Activated CD4-positive, alpha-beta T cell treated with anti-CD3 and anti-CD28 coated beads, Interleukin-2, amount 10 ng/mL, durations not matched to agents 7 days and 5 days (primary cell): ENCODE measurements at regions of chr12 and their contacts with region 1.

Region 1: GRCh38 chr12:10142976-10143589 is 13.1 kb upstream of the CLEC7A start:
- DNase-seq: no peak
- H3K4me3 Mint-ChIP-seq: no peak overlapping the region
- H3K27ac Mint-ChIP-seq: no peak overlapping the region
- H3K4me1 Mint-ChIP-seq: peaks cover 2% of the 10 kb centered on the region
- H3K27me3 Mint-ChIP-seq: peaks cover 26% of the 10 kb centered on the region

Region 2: GRCh38 chr12:9634177-9634803 is 508.8 kb before region 1 on chr12:
- CTCF ChIA-PET with region 1: no interaction called
- POLR2A ChIA-PET with region 1: no interaction called
- DNase-seq: peak; percentile 88
- H3K4me3 Mint-ChIP-seq: no peak overlapping the region
- H3K27ac Mint-ChIP-seq: peak overlapping the region; percentile 80
- H3K4me1 Mint-ChIP-seq: peaks cover 58% of the 10 kb centered on the region
- H3K27me3 Mint-ChIP-seq: no peaks in the 10 kb centered on the region

Region 3: DNA sequence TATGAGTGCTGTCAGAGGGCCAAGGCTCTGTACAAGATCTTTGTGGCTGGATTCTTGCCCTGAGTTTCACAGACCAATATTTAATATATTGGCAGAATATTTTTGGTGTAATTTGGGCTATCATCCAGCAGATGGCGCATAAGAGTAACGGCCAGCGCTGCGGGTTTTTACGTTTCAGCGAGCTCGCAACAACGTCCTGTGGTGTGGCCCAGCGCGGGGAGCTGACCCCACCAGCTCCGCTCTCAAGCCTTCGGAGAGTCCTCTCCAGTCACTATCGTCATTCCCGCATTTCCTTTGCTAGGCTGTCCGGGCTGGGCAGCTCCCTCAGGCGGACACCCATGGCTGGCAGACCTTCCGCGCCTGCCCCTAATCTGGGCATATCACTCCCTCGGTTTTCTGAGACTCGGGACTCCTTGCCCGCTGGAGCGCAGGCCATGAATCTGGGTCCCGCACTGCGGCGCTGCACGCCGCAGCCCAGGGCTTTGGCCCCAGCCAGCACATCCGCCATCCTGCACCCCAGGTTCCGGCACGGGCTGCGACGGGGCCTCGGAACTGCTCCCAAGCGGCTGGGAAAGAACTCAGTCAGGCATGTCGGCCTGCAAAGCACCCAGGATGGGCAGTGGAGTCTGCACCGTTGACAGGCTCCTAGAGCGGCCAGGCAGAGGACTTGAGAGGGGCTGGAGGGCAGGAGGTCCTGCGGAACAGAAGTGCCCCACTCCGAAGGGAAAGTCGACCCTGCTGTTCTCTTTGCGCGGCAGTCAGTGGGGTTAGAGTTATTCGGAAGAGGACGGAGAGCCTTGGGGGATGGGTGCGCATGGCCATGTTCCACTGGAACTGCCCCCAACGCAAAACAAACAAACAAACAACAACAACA is 10.4 kb after region 1 on chr12:
- CTCF ChIA-PET with region 1: interaction called, 13 read pairs
- POLR2A ChIA-PET with region 1: interaction called, 4 read pairs
- DNase-seq: peak; percentile 65
- H3K4me3 Mint-ChIP-seq: peak overlapping the region; percentile 84
- H3K27ac Mint-ChIP-seq: peak overlapping the region; percentile 69
- H3K4me1 Mint-ChIP-seq: peaks cover 11% of the 10 kb centered on the region
- H3K27me3 Mint-ChIP-seq: peaks cover 37% of the 10 kb centered on the region

Region 4: GRCh38 chr12:10182354-10183061 is 39.4 kb after region 1 on chr12:
- CTCF ChIA-PET with region 1: no interaction called
- POLR2A ChIA-PET with region 1: no interaction called
- DNase-seq: no peak
- H3K4me3 Mint-ChIP-seq: no peak overlapping the region
- H3K27ac Mint-ChIP-seq: no peak overlapping the region
- H3K4me1 Mint-ChIP-seq: no peaks in the 10 kb centered on the region
- H3K27me3 Mint-ChIP-seq: peaks cover 29% of the 10 kb centered on the region